Activated T-helper 2 cell treated with anti-CD3 and anti-CD28 coated beads, Interferon-gamma antibody, Interleukin-2, Interleukin-4, amounts not matched to agents 10 μg/mL and 5 μg/mL and 100 μg/mL, durations not matched to agents 14 hours and 24 hours and 36 hours (primary cell): ENCODE measurements at regions of chr10 and their contacts with region 1.

Region 1: GRCh38 chr10:47176903-47177868 is 122.8 kb upstream of the GDF10 start:
- DNase-seq: no peak
- H3K4me3 Mint-ChIP-seq: no peak overlapping the region
- H3K27ac Mint-ChIP-seq: no peak overlapping the region
- H3K4me1 Mint-ChIP-seq: peaks cover 6% of the 10 kb centered on the region
- H3K27me3 Mint-ChIP-seq: peaks cover 7% of the 10 kb centered on the region

Region 2: GRCh38 chr10:47047671-47048525 is 129.3 kb before region 1 on chr10:
- intact Hi-C with region 1: loop called (anchors 5 kb)
- DNase-seq: peak; percentile 65
- H3K4me3 Mint-ChIP-seq: no peak overlapping the region
- H3K27ac Mint-ChIP-seq: no peak overlapping the region
- H3K4me1 Mint-ChIP-seq: peaks cover 16% of the 10 kb centered on the region
- H3K27me3 Mint-ChIP-seq: no peaks in the 10 kb centered on the region